ENCODE measurements at regions of chr11 and their contacts with region 1.

Region 1: GRCh38 chr11:20609727-20610707 is 10.6 kb downstream of the SLC6A5 start:
- DNase-seq: peak; percentile 48
- ATAC-seq: peak; percentile 100
- H3K4me3 ChIP-seq: no peak overlapping the region
- H3K27ac ChIP-seq: no peak overlapping the region
- H3K4me1 ChIP-seq: no peaks in the 10 kb centered on the region
- H3K27me3 ChIP-seq: peaks cover 24% of the 10 kb centered on the region
- CTCF ChIP-seq: peak; percentile 92
- POLR2A ChIP-seq: no peak
- RAD21 ChIP-seq: peak; percentile 82

Region 2: GRCh38 chr11:19938169-19938856 is 671.7 kb before region 1 on chr11:
- CTCF ChIA-PET with region 1: no interaction called
- POLR2A ChIA-PET with region 1: no interaction called
- dilution Hi-C with region 1: no loop called
- in situ Hi-C with region 1: loop called (anchors 25 kb)
- intact Hi-C with region 1: loop called (anchors 10 kb)
- DNase-seq: peak; percentile 54
- ATAC-seq: peak; percentile 71
- H3K4me3 ChIP-seq: no peak overlapping the region
- H3K27ac ChIP-seq: no peak overlapping the region
- H3K4me1 ChIP-seq: peaks cover 11% of the 10 kb centered on the region
- H3K27me3 ChIP-seq: no peaks in the 10 kb centered on the region
- CTCF ChIP-seq: peak; percentile 74
- POLR2A ChIP-seq: no peak
- RAD21 ChIP-seq: peak; percentile 63

Region 3: DNA sequence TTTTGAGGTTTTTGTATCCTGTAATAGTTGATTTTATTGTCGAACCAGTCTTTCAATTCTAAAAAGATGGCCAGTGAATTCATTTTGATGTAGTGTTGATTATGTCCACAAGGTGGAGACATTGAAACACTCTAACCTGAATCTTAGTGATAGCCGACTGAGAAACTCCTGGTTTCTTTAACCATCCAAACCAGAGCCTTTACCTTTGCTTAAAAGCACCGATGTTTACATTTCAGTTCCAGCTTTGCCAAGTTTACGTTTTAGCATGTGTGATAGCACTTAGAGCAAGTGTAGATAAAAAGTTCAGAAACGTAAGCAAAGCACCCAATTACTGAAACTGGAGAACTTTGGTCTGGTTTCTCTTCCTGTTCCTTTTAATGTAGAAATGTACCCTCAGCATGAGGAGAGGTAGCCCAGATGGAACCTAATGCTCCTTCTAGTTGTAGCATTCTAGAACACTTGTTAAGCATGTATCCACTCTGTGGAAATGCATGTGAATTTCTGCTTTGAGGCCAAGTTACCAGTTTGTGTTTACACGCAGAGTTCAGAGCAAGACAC is 658.4 kb before region 1 on chr11:
- CTCF ChIA-PET with region 1: no interaction called
- POLR2A ChIA-PET with region 1: no interaction called
- dilution Hi-C with region 1: no loop called
- in situ Hi-C with region 1: loop called (anchors 25 kb)
- intact Hi-C with region 1: loop called (anchors 10 kb)
- DNase-seq: peak; percentile 70
- ATAC-seq: peak; percentile 69
- H3K4me3 ChIP-seq: no peak overlapping the region; the same call in 1 of the 2 replicates
- H3K27ac ChIP-seq: no peak overlapping the region
- H3K4me1 ChIP-seq: peaks cover 15% of the 10 kb centered on the region
- H3K27me3 ChIP-seq: no peaks in the 10 kb centered on the region
- CTCF ChIP-seq: peak; percentile 73
- POLR2A ChIP-seq: no peak
- RAD21 ChIP-seq: peak; percentile 75

Region 4: DNA sequence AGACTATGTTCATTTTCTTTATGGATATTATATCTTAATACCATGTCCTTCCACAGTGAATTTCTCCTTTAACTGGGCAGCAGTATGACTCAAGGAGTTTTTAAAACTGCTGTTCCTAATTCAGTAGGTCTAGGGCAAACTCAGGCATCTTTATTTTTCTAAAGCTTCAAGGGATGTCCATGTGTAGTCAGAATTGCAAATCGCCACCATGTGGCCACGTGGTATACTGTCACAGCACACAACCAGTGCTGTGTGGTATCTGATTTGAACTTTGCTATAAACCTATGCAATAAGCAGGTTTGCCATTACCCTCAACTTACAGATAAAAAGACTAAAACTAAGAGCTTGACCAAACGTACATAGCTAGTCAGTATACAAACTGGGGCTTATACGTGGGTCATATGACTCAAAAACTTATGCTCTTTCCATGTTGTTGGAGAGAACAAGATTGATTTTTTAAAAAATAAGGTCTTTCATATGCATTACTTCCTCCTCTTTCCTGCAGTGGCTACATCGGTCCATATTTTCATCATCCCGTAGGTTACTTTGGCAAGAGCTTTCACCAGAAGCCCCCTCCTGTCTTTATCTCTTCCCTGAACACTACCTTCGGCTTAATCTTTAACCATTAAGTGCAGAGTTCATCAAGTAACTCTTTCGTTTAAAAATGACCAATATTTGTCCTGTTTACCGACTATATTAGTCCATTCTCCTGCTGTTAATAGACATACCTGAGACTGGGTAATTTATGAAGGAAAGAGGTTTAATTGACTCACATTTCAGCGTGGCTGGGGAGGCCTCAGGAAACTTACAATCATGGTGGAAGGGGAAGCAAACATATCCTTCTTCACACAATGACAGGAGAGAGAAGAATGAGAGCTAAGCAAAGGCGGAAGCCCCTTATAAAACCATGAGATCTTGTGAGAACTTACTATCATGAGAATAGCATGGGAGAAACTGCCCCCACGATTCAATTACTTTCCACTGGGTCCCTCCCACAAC is 254.5 kb before region 1 on chr11:
- CTCF ChIA-PET with region 1: no interaction called
- POLR2A ChIA-PET with region 1: no interaction called
- dilution Hi-C with region 1: no loop called
- in situ Hi-C with region 1: no loop called
- intact Hi-C with region 1: loop called (anchors 1 kb)
- DNase-seq: peak; percentile 58
- ATAC-seq: peak; percentile 92
- H3K4me3 ChIP-seq: no peak overlapping the region
- H3K27ac ChIP-seq: no peak overlapping the region
- H3K4me1 ChIP-seq: peaks cover 2% of the 10 kb centered on the region; the same call in 1 of the 2 replicates
- H3K27me3 ChIP-seq: peaks cover 15% of the 10 kb centered on the region
- CTCF ChIP-seq: peak; percentile 62
- POLR2A ChIP-seq: no peak
- RAD21 ChIP-seq: peak; percentile 36; the same call in 1 of the 2 replicates

Region 5: GRCh38 chr11:20387241-20388095 is 222.5 kb before region 1 on chr11 and contains the start of gene PRMT3:
- CTCF ChIA-PET with region 1: no interaction called
- POLR2A ChIA-PET with region 1: no interaction called
- dilution Hi-C with region 1: no loop called
- in situ Hi-C with region 1: loop called (anchors 5 kb)
- intact Hi-C with region 1: loop called (anchors 2 kb)
- DNase-seq: peak; percentile 94
- ATAC-seq: peak; percentile 92
- H3K4me3 ChIP-seq: peak within 1 kb of the TSS; percentile 94
- H3K27ac ChIP-seq: peak within 1 kb of the TSS; percentile 99
- H3K4me1 ChIP-seq: peaks cover 3% of the 10 kb centered on the region
- H3K27me3 ChIP-seq: no peaks in the 10 kb centered on the region
- CTCF ChIP-seq: peak; percentile 90
- POLR2A ChIP-seq: peak; percentile 94
- RAD21 ChIP-seq: no peak; the same call in 1 of the 2 replicates
- total RNA-seq, gene PRMT3: 11.3 and 15.0 TPM in 2 replicates

Region 6: GRCh38 chr11:20397281-20397680 is 212.7 kb before region 1 on chr11:
- CTCF ChIA-PET with region 1: interaction called, 15 read pairs
- POLR2A ChIA-PET with region 1: no interaction called
- dilution Hi-C with region 1: no loop called
- in situ Hi-C with region 1: loop called (anchors 5 kb)
- intact Hi-C with region 1: loop called (anchors 1 kb)
- DNase-seq: peak; percentile 57
- ATAC-seq: peak; percentile 87
- H3K4me3 ChIP-seq: no peak overlapping the region
- H3K27ac ChIP-seq: no peak overlapping the region
- H3K4me1 ChIP-seq: no peaks in the 10 kb centered on the region
- H3K27me3 ChIP-seq: no peaks in the 10 kb centered on the region
- CTCF ChIP-seq: peak; percentile 61
- POLR2A ChIP-seq: no peak
- RAD21 ChIP-seq: peak; percentile 44

Region 7: GRCh38 chr11:20566591-20567434 is 43.2 kb before region 1 on chr11:
- CTCF ChIA-PET with region 1: no interaction called
- POLR2A ChIA-PET with region 1: no interaction called
- dilution Hi-C with region 1: no loop called
- in situ Hi-C with region 1: no loop called
- intact Hi-C with region 1: no loop called
- DNase-seq: no peak
- ATAC-seq: no peak
- H3K4me3 ChIP-seq: no peak overlapping the region
- H3K27ac ChIP-seq: no peak overlapping the region
- H3K4me1 ChIP-seq: no peaks in the 10 kb centered on the region
- H3K27me3 ChIP-seq: no peaks in the 10 kb centered on the region
- CTCF ChIP-seq: no peak
- POLR2A ChIP-seq: no peak
- RAD21 ChIP-seq: no peak